Right ventricle myocardium inferior (tissue), 1 donor: ENCODE measurements at regions of chr6 and their contacts with region 1.

Region 1: GRCh38 chr6:25717866-25718740 is 36.4 kb upstream of the SLC17A4 start:
- DNase-seq: no peak
- ATAC-seq: no peak

Region 2: GRCh38 chr6:25992413-25993037 is 274.4 kb after region 1 on chr6:
- intact Hi-C with region 1: loop called (anchors 5 kb)
- DNase-seq: peak; percentile 98
- ATAC-seq: peak; percentile 97